AG04450 (cell line): ENCODE measurements at regions of chr7 and their contacts with region 1.

Region 1: DNA sequence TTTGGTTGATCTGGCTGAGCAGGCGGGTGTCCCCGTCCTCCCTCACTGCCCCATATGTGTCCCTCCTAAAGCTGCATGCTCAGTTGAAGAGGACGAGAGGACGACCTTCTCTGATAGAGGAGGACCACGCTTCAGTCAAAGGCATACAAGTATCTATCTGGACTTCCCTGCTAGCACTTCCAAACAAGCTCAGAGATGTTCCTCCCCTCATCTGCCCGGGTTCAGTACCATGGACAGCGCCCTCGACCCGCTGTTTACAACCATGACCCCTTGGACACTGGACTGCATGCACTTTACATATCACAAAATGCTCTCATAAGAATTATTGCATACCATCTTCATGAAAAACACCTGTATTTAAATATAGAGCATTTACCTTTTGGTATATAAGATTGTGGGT is 26.9 kb upstream of the TRIM56 start:
- DNase-seq: no peak
- H3K4me3 ChIP-seq: no peak overlapping the region
- H3K27ac ChIP-seq: no peak overlapping the region
- H3K27me3 ChIP-seq: peaks cover 14% of the 10 kb centered on the region
- CTCF ChIP-seq: no peak

Region 2: DNA sequence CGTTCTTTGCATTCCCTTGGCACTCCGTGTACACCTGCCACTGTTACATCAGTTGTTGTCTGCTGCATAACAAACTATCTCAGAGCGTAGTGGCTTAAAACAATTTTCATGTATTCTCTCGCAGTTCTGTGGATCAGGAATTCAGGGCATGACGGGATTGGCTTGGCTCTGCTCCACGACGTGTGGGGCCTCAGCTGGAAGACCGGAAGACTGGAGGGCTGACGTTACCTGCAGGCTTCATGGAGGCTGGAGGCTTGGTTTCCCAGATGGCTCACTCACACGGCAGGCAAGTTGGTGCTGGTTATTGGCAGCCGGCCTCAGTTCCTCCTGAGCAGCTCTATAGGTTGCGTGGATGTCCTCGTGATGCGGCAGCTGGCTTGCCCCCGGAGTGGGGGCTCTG is 549.1 kb before region 1 on chr7:
- CTCF ChIA-PET with region 1: no interaction called
- POLR2A ChIA-PET with region 1: no interaction called
- DNase-seq: peak; percentile 78
- H3K4me3 ChIP-seq: no peak overlapping the region
- H3K27ac ChIP-seq: peak overlapping the region; percentile 57
- H3K27me3 ChIP-seq: no peaks in the 10 kb centered on the region
- CTCF ChIP-seq: no peak

Region 3: DNA sequence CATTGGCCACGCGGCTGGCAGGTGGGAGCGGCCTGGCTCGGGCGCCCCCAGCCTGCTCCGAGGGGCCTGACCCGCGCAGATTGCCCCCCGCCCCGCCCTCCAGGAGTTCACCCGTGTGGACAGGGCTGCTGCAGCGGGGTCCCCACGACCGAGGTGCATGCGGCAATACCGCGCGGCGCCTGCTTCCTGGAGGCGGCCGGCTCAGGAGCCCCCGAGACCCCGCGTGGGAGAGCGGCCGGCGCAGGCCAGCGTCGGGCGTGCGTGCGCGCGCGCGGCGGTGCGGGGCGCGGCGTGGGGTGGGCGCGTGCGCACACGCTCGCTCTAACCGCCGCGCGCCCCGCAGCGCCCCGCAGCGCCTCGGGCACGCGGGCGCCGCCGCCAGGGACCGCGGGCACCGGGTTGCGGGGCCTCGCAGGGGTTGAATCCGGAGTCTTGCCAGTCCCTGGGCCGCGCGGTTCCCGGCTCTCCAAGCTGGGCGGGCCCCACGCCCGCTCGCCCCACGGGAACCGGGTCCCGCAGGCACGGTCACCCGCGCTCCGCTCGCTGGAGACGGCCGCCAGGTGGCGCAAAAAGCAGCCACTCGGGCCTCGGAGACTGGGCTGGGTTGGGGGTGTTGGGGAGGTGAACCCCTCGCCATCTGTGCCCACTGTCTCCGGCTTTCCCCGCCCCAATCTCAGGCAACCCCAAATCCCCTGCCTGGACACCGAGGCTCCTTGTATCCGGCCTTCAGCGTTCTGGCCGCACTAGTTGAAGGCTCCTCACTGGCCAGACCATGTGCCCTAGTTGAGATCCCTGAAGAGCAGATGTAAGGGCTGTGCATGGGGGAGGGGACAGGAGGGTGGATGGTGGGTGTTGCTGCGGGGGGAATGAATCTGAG is 161.4 kb before region 1 on chr7:
- CTCF ChIA-PET with region 1: interaction called, 27 read pairs
- POLR2A ChIA-PET with region 1: no interaction called
- DNase-seq: no peak
- H3K4me3 ChIP-seq: peak overlapping the region; percentile 31; the same call in 1 of the 2 replicates
- H3K27ac ChIP-seq: no peak overlapping the region
- H3K27me3 ChIP-seq: peaks cover 33% of the 10 kb centered on the region
- CTCF ChIP-seq: peak; percentile 70